Right ventricle myocardium inferior (tissue), 1 donor: ENCODE measurements at regions of chr16 and their contacts with region 1.

Region 1: DNA sequence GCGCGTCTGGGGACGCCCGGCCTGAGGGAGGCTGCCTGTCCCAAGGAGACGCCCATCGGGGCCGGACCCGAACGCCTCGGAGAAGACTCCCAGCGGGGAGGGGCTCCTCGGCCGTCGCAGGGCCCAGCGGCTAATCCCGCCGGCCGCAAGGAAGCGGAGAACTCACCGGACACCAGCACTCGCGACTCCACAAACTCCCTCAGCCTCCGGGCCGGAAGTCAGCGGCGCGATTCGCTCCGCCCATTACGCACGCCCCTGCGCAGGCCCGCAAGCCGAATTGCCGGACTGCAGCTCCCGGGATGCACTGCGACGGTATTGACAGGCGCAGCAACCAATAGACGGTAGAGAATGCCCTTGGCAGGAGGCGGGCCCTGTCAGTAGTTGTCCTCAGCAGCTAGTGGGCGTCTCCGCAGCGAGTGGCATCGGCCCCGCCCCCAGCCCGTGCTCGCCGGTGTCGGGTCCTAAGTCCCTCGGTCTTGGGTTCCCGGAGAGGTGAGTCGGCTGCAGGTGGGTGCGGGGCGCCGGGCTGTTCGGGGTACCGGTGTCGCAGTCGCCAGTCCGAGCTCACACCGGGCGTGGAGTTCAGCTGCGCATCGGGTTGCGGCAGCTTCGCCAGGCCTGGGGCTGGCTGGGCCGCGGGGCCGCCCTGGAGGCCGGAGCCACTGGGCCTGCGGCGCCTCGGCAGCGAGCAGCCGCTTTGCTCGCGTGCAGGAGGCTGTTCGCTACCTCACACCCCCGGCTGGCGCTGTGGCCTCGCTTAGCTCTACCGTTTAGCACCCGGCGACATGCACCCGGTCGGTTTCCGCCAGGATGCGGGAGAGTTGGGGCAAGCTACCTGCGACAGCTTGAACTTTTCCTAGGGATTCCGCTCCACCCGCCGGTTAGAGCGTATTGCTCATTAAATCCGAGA is at the starts of genes ZNF174 and ZSCAN32:
- DNase-seq: peak; percentile 99
- ATAC-seq: peak; percentile 100
- total RNA-seq, gene ZNF174: 10.0 TPM
- total RNA-seq, gene ZSCAN32: 6.9 TPM

Region 2: DNA sequence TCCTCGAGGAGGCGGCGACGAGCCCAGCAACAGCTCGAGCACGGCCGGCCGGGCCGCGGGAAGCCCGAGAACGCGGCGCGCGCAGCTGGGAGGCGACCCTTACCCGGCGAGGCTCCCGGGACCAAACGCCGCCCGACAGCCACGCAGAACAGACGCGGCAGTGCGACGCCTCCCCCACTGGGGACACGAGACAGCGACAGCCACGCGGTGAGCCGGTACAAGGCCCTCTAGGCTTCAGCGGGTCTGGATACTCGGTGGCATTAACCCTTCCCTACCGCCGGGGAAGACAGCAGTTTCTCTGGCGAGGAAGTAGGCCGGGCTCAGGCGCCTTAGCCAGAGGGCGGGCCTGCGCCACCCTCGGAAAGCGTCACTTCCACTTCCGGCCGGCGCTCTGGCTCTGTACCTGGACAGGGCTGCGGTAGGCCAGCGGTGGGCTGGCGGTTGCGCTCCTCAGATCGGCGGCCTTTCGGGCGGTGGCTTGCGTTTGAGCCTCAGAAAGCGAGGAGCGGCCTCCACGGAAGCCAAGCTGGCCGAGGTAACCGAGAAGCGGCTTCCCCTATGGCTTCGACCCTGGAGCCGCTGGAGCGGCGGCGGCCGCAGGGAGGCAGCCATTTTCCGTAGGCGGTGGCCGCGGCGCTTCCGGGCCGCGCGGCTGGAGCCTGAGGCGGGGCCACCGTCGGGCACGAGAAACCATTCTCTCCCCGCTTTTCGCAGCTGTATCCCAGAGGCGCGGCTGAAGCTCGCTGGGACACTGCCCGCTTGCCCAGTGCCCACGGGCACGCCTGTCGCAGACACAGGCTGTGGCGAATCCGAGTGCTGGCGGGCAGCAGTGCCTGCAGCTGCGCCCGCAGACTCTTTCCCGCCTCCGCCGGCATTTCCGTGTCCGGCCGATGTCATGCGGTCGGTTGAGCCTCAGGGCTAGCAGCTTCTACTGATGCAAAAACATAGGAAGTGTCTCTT is 95.6 kb before region 1 on chr16 and contains the starts of genes TIGD7 and ZNF75A:
- intact Hi-C with region 1: loop called (anchors 2 kb)
- DNase-seq: peak; percentile 96
- ATAC-seq: peak; percentile 99
- total RNA-seq, gene TIGD7: 8.4 TPM
- total RNA-seq, gene ZNF75A: 19.0 TPM

Region 3: DNA sequence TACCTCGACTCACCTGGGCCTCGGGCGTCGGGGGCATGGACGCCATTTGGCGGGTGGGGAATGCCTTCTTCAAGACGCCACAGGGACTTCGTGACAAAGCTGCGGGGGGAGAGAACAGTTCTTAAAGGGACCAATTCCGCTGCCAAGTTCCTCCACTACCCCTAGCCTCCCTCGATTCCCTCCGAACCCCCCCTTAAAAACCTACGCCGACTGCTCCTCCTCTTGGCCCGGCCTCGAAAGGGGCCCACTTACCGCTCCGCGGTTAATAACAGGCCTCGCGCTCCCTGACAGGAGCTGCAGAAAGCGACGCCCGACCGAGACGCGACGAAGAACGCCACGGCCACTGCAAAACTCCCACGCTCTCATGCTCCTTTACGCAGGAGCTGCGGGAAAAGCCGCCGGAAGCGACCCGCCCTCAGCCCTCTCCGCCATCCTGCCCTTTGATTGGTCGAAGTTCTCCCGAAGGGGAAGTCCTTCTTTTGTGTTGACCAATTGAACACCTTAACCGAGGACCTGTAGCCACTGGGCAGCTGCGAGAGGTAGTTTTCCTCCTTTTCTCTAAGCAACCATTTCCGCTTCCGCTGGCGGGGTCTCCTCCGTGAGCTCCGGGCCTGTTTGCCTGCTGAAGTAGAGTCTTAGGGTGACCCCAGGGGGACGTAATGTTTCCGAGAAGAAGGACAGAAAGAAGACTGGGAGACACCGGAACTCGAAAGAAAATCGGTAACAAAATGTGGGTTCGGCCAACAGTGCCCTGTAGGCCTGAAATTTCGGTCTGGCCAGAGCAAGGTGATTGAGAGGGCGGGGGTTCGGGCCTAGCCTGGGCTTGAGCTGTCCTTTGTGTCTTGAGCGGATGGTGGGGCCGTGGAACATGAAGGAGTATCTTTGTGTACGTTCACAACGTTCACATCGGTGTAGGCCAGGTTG is 42.3 kb after region 1 on chr16 and contains the starts of genes NAA60 and ZNF597:
- intact Hi-C with region 1: loop called (anchors 5 kb)
- DNase-seq: peak; percentile 84
- ATAC-seq: peak; percentile 98
- total RNA-seq, gene NAA60: 42.7 TPM
- total RNA-seq, gene ZNF597: 1.8 TPM

Region 4: DNA sequence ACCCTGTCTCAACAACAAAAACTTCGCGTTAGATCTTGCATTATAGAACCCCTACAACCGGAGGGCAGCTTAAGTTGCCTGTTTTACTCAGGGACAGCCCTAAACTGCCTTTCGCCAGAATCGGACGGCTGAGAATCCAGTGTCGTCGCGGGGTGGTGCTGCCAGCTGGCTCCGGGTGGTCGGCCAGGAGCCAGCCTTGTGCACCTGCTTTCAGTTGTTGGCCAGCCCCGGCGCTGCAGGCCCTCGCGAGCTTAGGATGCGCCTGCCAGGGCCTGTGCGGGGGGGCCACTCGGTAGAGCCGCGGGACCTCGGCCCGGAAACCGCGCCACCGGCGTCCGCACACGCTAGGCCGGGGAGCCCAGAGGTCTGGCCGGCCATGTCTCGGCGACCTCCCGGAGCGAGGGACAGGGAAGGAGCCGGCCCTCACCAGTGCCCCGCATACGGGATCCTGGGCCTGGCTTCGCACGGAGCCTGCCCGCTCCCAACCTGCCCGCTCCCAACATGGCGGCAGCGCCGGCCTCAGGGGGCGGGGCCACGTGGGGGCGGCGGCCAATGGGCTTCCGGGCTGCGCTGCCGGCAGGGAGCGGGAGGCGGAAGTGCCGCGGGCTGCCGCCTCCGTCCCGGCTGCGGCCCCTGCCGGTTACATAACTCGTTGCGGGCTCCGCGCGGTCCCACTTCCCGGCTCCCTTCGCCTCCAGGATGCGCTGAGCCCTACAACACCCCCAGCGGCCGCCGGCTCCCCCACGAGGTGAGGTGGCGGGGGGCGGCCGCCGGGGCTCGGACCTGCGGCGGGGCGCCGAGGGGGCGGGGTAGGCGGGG is 56.6 kb after region 1 on chr16:
- intact Hi-C with region 1: loop called (anchors 2 kb)
- DNase-seq: peak; percentile 96
- ATAC-seq: peak; percentile 92

Region 5: GRCh38 chr16:3503523-3503922 is 102.5 kb after region 1 on chr16:
- intact Hi-C with region 1: loop called (anchors 2 kb)
- DNase-seq: no peak
- ATAC-seq: no peak